ENCODE measurements at regions of chr17 and their contacts with region 1.

Region 1: DNA sequence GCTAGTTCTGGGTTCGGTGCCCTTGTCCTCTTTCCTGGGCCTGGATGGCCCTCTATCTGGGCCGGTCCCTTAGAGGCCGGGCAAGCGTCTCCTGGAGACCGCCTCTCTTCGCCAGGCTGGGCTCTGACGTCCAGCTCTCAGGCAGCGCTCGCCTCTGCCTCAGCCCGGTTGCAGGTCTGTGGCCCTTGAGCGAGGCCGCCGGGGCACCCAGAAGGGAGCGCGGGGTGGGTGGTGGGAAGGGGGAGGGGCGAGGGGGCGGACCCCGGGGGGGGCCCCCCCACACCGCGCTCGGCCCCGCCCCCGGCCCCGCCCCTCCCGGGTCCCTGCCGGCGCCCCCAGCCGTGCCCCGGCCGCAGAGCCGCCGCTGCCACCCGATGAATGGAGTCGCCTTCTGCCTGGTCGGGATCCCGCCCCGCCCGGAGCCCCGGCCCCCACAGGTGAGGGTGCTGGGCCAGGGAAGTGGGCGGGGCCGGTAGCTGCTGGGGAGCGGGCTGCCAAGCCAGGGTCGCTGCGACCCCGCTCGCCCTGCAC is at the start of gene ARHGAP23:
- DNase-seq: peak in 1 of 2 donors; percentile 87
- H3K4me3 ChIP-seq: peak within 1 kb of the TSS; percentile 81 to 98
- H3K27ac ChIP-seq: peak within 1 kb of the TSS; percentile 94 to 98
- H3K4me1 ChIP-seq: peaks cover 12 to 43% of the 10 kb centered on the region in 2 donors
- H3K27me3 ChIP-seq: no peaks in the 10 kb centered on the region
- CTCF ChIP-seq: no peak
- total RNA-seq, gene ARHGAP23: 89.0 TPM

Region 2: GRCh38 chr17:38444151-38444550 is 16.0 kb after region 1 on chr17:
- intact Hi-C with region 1: loop called (anchors 2 kb)
- DNase-seq: peak in 1 of 2 donors; percentile 83
- H3K4me3 ChIP-seq: no peak overlapping the region
- H3K27ac ChIP-seq: peak overlapping the region; percentile 74 to 75
- H3K4me1 ChIP-seq: peaks cover 15 to 38% of the 10 kb centered on the region in 2 donors
- H3K27me3 ChIP-seq: no peaks in the 10 kb centered on the region
- CTCF ChIP-seq: peak; percentile 86 to 89 (median 87)

Region 3: GRCh38 chr17:38464723-38465390 is 36.7 kb after region 1 on chr17:
- intact Hi-C with region 1: loop called (anchors 1 kb)
- DNase-seq: peak; percentile 67 to 96
- H3K4me3 ChIP-seq: peak overlapping the region; percentile 54 to 66
- H3K27ac ChIP-seq: peak overlapping the region; percentile 95 to 99
- H3K4me1 ChIP-seq: peaks cover 20 to 47% of the 10 kb centered on the region in 2 donors
- H3K27me3 ChIP-seq: no peaks in the 10 kb centered on the region
- CTCF ChIP-seq: no peak

Region 4: DNA sequence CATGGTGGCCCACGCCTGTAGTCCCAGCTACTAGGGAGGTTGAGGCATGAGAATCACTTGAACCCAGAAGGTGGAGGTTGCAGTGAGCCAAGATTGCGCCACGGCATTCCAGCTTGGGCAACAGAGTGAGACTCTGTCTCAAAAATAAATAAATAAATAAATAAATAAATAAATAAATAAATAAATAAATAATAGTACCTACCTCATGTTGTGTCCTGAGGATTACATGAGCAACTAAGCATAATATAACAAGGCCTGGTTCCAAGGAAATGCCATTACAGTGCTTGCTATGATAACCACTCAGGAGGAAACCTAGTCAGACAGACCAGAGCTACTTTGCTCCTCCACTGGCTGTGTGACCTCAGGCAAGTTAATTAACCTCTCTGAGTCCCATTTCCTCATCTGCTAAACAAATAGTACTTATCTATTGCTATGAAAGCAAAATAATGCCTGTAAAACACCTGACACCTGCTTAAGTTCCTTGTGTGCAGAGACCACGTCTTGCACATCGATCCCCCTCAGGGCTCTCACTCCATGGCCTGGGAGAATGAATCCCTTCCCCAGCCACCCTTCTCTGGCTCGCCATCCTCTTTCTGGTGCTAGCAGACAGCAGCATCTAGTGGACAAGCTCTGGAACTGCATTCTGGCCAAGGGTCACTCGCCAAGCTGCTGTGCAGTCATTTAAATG is 239.1 kb after region 1 on chr17:
- intact Hi-C with region 1: loop called (anchors 10 kb)
- DNase-seq: peak in 1 of 2 donors; percentile 81
- H3K4me3 ChIP-seq: no peak overlapping the region
- H3K27ac ChIP-seq: no peak overlapping the region
- H3K4me1 ChIP-seq: no peaks in the 10 kb centered on the region
- H3K27me3 ChIP-seq: no peaks in the 10 kb centered on the region
- CTCF ChIP-seq: peak; percentile 93 to 99 (median 98)

Measured in ascending aorta (tissue), 2 donors.